ENCODE measurements at regions of chr1 and their contacts with region 1.

Region 1: DNA sequence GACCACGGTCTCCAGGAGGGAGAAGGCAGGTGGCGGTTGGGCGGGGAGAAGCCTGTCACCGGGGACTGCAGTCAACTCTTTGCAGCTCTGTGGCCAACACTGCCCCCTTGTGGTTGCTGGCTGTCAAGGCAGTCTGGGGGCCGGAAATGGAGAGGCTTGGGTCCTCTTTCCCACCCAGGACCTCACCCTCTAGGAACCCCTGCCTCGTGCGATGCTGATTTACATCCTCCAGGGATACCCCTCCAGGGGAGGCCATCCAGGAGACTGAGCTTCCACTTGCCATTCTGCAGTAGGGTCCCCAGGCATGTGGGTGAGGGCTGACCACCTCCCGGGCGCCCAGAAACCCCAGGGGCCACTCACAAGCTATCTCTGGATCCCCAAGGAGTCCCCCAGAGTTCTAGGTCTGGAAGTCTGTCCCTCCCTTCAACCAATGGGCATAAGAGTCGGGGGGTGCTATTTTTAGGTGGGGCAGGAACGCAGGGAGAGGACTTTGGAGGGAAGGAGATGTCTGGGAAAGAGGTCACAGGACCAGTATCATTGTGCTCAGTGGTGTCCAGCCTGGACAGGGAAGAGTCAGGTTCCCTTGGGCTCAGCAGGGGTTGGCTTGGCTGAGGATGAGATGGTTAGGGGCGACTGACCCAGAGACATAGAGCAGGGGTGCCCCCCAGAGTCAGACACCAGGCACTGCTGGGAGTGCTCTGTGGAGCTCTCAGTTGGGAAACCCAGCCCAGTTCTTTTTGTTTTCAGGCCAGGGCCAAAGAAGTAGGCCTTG is 7.1 kb upstream of the GPR61 start:
- DNase-seq: peak; percentile 96
- H3K4me3 Mint-ChIP-seq: peak overlapping the region; percentile 57
- H3K27ac Mint-ChIP-seq: peak overlapping the region; percentile 81
- H3K4me1 Mint-ChIP-seq: peaks cover 22% of the 10 kb centered on the region
- H3K27me3 Mint-ChIP-seq: no peaks in the 10 kb centered on the region

Region 2: GRCh38 chr1:108828022-108828961 is 704.3 kb before region 1 on chr1:
- CTCF ChIA-PET with region 1: no interaction called
- intact Hi-C with region 1: loop called (anchors 2 kb)
- DNase-seq: peak; percentile 83
- H3K4me3 Mint-ChIP-seq: no peak overlapping the region
- H3K27ac Mint-ChIP-seq: no peak overlapping the region
- H3K4me1 Mint-ChIP-seq: no peaks in the 10 kb centered on the region
- H3K27me3 Mint-ChIP-seq: no peaks in the 10 kb centered on the region

Region 3: DNA sequence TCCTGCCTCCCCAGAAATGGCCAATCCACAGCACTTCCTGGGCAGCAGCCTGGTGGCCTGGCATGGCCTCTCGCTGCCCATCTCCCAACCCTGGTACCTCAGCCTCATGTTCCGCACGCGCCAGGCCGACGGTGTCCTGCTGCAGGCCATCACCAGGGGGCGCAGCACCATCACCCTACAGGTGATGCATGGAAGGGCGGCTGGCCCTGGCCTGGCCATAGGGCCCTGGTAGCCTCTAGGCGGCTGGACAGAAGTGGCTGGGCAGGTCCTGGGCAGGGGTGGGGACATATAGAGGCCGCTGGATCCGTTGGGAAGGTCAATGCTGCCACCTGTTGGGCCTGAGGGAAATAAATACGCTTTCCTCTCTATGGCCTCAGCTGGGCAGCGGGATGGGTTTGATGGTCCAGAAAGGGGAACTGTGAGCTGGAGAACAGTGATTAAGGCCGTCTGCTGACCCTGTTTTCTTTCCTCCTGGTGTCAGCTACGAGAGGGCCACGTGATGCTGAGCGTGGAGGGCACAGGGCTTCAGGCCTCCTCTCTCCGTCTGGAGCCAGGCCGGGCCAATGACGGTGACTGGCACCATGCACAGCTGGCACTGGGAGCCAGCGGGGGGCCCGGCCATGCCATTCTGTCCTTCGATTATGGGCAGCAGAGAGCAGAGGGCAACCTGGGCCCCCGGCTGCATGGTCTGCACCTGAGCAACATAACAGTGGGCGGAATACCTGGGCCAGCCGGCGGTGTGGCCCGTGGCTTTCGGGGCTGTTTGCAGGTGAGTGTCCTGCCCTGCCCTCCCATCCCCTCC is 268.8 kb before region 1 on chr1:
- CTCF ChIA-PET with region 1: interaction called, 16 read pairs
- intact Hi-C with region 1: loop called (anchors 1 kb)
- DNase-seq: peak; percentile 84
- H3K4me3 Mint-ChIP-seq: no peak overlapping the region
- H3K27ac Mint-ChIP-seq: no peak overlapping the region
- H3K4me1 Mint-ChIP-seq: peaks cover 3% of the 10 kb centered on the region
- H3K27me3 Mint-ChIP-seq: peaks cover 1% of the 10 kb centered on the region

Region 4: GRCh38 chr1:109397538-109398342 is 134.8 kb before region 1 on chr1 and contains the start of gene SORT1:
- CTCF ChIA-PET with region 1: interaction called, 46 read pairs
- intact Hi-C with region 1: loop called (anchors 1 kb)
- DNase-seq: peak; percentile 53
- H3K4me3 Mint-ChIP-seq: peak within 1 kb of the TSS; percentile 77
- H3K27ac Mint-ChIP-seq: no peak within 1 kb of the TSS
- H3K4me1 Mint-ChIP-seq: peaks cover 8% of the 10 kb centered on the region
- H3K27me3 Mint-ChIP-seq: peaks cover 35% of the 10 kb centered on the region
- total RNA-seq, gene SORT1: 0.32 to 0.33 TPM

Region 5: GRCh38 chr1:109493805-109494539 is 38.6 kb before region 1 on chr1 and contains the start of gene CYB561D1:
- CTCF ChIA-PET with region 1: interaction called, 1,207 read pairs
- intact Hi-C with region 1: loop called (anchors 1 kb)
- DNase-seq: peak; percentile 90
- H3K4me3 Mint-ChIP-seq: peak within 1 kb of the TSS; percentile 98
- H3K27ac Mint-ChIP-seq: peak within 1 kb of the TSS; percentile 92
- H3K4me1 Mint-ChIP-seq: peaks cover 54% of the 10 kb centered on the region
- H3K27me3 Mint-ChIP-seq: no peaks in the 10 kb centered on the region
- total RNA-seq, gene CYB561D1: 6.6 to 8.5 TPM

Region 6: DNA sequence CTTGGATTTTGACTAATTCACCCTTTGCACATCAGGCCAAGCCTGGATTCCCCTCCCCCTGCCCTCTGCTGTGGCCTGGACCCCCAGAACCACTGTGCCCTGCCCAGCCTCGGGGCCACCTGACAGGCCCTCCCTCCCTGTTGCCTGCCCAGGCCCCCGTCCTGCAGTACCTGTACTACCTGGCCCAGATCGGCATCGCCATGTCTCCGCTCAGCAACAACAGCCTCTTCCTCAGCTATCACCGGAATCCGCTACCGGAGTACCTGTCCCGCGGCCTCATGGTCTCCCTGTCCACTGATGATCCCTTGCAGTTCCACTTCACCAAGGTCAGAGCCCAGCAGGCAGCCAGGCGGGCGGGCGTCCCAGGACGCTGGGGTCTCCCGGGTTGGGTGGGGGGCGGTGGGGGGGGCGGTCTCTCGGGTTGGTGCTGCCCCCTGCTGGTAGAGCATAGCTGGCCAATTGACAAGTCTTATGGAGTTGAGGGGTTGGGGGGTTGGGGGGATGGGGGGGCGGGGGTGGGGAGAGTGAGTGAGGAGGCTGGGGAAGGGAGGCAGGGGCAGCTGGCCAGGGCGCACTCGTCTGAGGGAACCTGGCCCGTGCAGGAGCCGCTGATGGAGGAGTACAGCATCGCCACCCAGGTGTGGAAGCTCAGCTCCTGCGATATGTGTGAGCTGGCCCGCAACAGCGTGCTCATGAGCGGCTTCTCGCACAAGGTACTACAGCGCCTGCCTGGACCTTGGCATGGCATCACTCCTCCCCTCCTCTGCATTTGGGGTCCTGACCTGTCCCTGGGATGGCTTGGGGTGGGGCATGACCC is 97.7 kb after region 1 on chr1:
- CTCF ChIA-PET with region 1: interaction called, 12 read pairs
- intact Hi-C with region 1: no loop called
- DNase-seq: peak; percentile 58
- H3K4me3 Mint-ChIP-seq: no peak overlapping the region
- H3K27ac Mint-ChIP-seq: no peak overlapping the region
- H3K4me1 Mint-ChIP-seq: peaks cover 11% of the 10 kb centered on the region
- H3K27me3 Mint-ChIP-seq: no peaks in the 10 kb centered on the region

Region 7: GRCh38 chr1:110370827-110371226 is 838.3 kb after region 1 on chr1:
- CTCF ChIA-PET with region 1: no interaction called
- intact Hi-C with region 1: no loop called
- DNase-seq: peak; percentile 31
- H3K4me3 Mint-ChIP-seq: no peak overlapping the region
- H3K27ac Mint-ChIP-seq: no peak overlapping the region
- H3K4me1 Mint-ChIP-seq: peaks cover 16% of the 10 kb centered on the region
- H3K27me3 Mint-ChIP-seq: no peaks in the 10 kb centered on the region

Measured in activated naive CD4-positive, alpha-beta T cell treated with anti-CD3 and anti-CD28 coated beads for 36 hours (primary cell).